Panc1 (cell line): ENCODE measurements at regions of chr6 and their contacts with region 1.

Region 1: GRCh38 chr6:83221889-83222479 is 28.8 kb downstream of the RWDD2A start:
- DNase-seq: no peak
- ATAC-seq: no peak
- H3K4me3 ChIP-seq: no peak overlapping the region
- H3K27ac ChIP-seq: no peak overlapping the region
- H3K4me1 ChIP-seq: no peaks in the 10 kb centered on the region
- H3K27me3 ChIP-seq: no peaks in the 10 kb centered on the region
- CTCF ChIP-seq: peak; percentile 67; the same call in 1 of the 2 replicates

Region 2: GRCh38 chr6:83169511-83169910 is 52.5 kb before region 1 on chr6:
- CTCF ChIA-PET with region 1: no interaction called
- POLR2A ChIA-PET with region 1: no interaction called
- in situ Hi-C with region 1: no loop called
- intact Hi-C with region 1: no loop called
- DNase-seq: no peak
- ATAC-seq: no peak
- H3K4me3 ChIP-seq: no peak overlapping the region
- H3K27ac ChIP-seq: no peak overlapping the region
- H3K4me1 ChIP-seq: no peaks in the 10 kb centered on the region
- H3K27me3 ChIP-seq: no peaks in the 10 kb centered on the region
- CTCF ChIP-seq: no peak

Region 3: GRCh38 chr6:83417880-83418663 is 196.1 kb after region 1 on chr6:
- CTCF ChIA-PET with region 1: no interaction called
- POLR2A ChIA-PET with region 1: no interaction called
- in situ Hi-C with region 1: no loop called
- intact Hi-C with region 1: loop called (anchors 2 kb)
- DNase-seq: peak; percentile 32
- ATAC-seq: peak; percentile 92
- H3K4me3 ChIP-seq: no peak overlapping the region
- H3K27ac ChIP-seq: no peak overlapping the region
- H3K4me1 ChIP-seq: no peaks in the 10 kb centered on the region
- H3K27me3 ChIP-seq: no peaks in the 10 kb centered on the region
- CTCF ChIP-seq: peak; percentile 71; the same call in 1 of the 2 replicates